ENCODE measurements at regions of chr19 and their contacts with region 1.

Region 1: GRCh38 chr19:14117668-14118164 is at the start of gene PRKACA:
- DNase-seq: peak; percentile 99
- ATAC-seq: peak; percentile 98
- H3K4me3 Mint-ChIP-seq: peak within 1 kb of the TSS; percentile 78
- H3K27ac Mint-ChIP-seq: peak within 1 kb of the TSS; percentile 77
- H3K4me1 Mint-ChIP-seq: peaks cover 41% of the 10 kb centered on the region
- H3K27me3 Mint-ChIP-seq: no peaks in the 10 kb centered on the region
- total RNA-seq, gene PRKACA: 58.1 to 68.7 TPM

Region 2: GRCh38 chr19:14081325-14082093 is 36.2 kb before region 1 on chr19:
- CTCF ChIA-PET with region 1: interaction called, 4 read pairs
- POLR2A ChIA-PET with region 1: no interaction called
- intact Hi-C with region 1: loop called in 1 of 2 experiments (anchors 1 kb)
- DNase-seq: peak; percentile 99
- ATAC-seq: peak; percentile 95
- H3K4me3 Mint-ChIP-seq: peak overlapping the region; percentile 90
- H3K27ac Mint-ChIP-seq: peak overlapping the region; percentile 92
- H3K4me1 Mint-ChIP-seq: peaks cover 10% of the 10 kb centered on the region
- H3K27me3 Mint-ChIP-seq: no peaks in the 10 kb centered on the region

Region 3: GRCh38 chr19:14237014-14237941 is 119.6 kb after region 1 on chr19:
- CTCF ChIA-PET with region 1: no interaction called
- POLR2A ChIA-PET with region 1: no interaction called
- intact Hi-C with region 1: no loop called
- DNase-seq: no peak
- ATAC-seq: no peak
- H3K4me3 Mint-ChIP-seq: no peak overlapping the region
- H3K27ac Mint-ChIP-seq: no peak overlapping the region
- H3K4me1 Mint-ChIP-seq: no peaks in the 10 kb centered on the region
- H3K27me3 Mint-ChIP-seq: no peaks in the 10 kb centered on the region